ENCODE measurements at regions of chr4 and their contacts with region 1.

Region 1: GRCh38 chr4:185096032-185096653 is 46.9 kb upstream of the SLC25A4 start:
- DNase-seq: peak; percentile 38
- CTCF ChIP-seq: peak; percentile 58

Region 2: GRCh38 chr4:185082561-185082960 is 13.6 kb before region 1 on chr4:
- CTCF ChIA-PET with region 1: interaction called, 19 read pairs
- POLR2A ChIA-PET with region 1: no interaction called
- DNase-seq: no peak
- CTCF ChIP-seq: no peak

Region 3: GRCh38 chr4:185108669-185109068 is 12.5 kb after region 1 on chr4:
- CTCF ChIA-PET with region 1: interaction called, 24 read pairs
- POLR2A ChIA-PET with region 1: no interaction called
- DNase-seq: no peak
- CTCF ChIP-seq: no peak

Measured in GM10248 (cell line).